ENCODE measurements at regions of chr12 and their contacts with region 1.

Region 1: GRCh38 chr12:6404390-6404789 is 20.4 kb downstream of the LTBR start:
- DNase-seq: no peak
- ATAC-seq: no peak
- H3K4me3 ChIP-seq: no peak overlapping the region
- H3K27ac ChIP-seq: no peak overlapping the region
- H3K4me1 ChIP-seq: no peaks in the 10 kb centered on the region
- H3K27me3 ChIP-seq: no peaks in the 10 kb centered on the region
- CTCF ChIP-seq: no peak

Region 2: GRCh38 chr12:6392504-6393077 is 11.8 kb before region 1 on chr12:
- CTCF ChIA-PET with region 1: interaction called, 14 read pairs
- POLR2A ChIA-PET with region 1: no interaction called
- in situ Hi-C with region 1: no loop called
- intact Hi-C with region 1: no loop called
- DNase-seq: no peak
- ATAC-seq: no peak
- H3K4me3 ChIP-seq: no peak overlapping the region
- H3K27ac ChIP-seq: no peak overlapping the region
- H3K4me1 ChIP-seq: no peaks in the 10 kb centered on the region
- H3K27me3 ChIP-seq: no peaks in the 10 kb centered on the region
- CTCF ChIP-seq: no peak

Measured in Panc1 (cell line).